ENCODE measurements at regions of chr2 and their contacts with region 1.

Region 1: GRCh38 chr2:88669371-88670214 is 21.9 kb upstream of the RPIA start:
- DNase-seq: no peak
- ATAC-seq: peak in 7 of 8 donors; percentile 42 to 84 (median 75)
- H3K4me3 ChIP-seq: no peak overlapping the region
- H3K27ac ChIP-seq: no peak overlapping the region
- H3K4me1 ChIP-seq: peaks cover 0 to 6% (median 0%) of the 10 kb centered on the region in 9 donors
- H3K27me3 ChIP-seq: no peaks in the 10 kb centered on the region
- CTCF ChIP-seq: peak; percentile 28 to 77 (median 64)

Region 2: DNA sequence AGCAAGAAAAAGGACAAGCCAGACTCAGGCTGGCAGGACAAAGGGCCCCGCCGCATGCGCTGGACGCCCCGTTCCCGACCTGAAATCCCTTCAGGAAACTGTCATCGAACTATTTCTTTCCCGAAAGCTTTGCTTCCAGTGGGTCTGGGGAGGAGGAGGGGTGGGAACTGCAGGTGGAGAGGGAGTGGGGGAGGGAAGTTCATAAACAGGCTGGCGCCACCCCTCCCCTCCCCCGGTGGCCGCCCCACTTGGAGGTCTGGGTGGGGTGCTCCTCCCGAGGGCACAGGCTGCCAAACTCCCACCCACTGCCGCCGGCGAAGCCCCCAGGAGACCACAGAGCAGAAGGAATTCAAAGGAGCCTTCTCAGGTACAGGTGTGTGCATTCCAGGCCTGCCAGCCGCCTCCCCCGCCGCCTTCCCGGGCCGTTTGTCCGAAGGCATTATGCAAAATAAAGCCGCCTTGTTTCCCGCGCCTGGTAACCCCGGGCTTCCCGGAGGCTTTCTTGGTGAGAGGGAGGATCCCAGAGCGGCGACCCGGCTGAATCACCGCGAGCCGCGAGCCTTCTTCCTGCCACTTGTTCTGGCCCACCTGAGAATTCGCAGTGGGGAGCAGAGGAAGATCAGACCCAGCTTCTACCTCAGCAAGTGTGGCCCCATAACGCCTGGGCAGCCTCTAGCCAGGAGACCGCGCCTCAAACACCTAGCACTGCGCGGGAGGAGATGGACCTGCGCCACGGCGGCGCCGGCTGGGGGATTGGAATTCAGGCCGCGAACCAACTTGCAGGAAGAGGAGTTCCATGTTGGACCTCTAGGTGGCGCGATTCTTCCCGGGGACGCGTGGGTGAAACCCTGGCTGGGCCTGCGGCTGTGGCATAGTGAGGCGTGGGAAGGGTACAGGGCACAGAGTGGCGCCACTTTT is 319.0 kb before region 1 on chr2:
- intact Hi-C with region 1: loop called in 1 of 10 experiments (anchors 10 kb)
- DNase-seq: peak; percentile 22 to 32
- ATAC-seq: peak in 3 of 8 donors; percentile 15 to 61 (median 26)
- H3K4me3 ChIP-seq: peak overlapping the region in 7 of 10 donors; percentile 5 to 27 (median 18)
- H3K27ac ChIP-seq: no peak overlapping the region
- H3K4me1 ChIP-seq: peaks cover 0 to 8% (median 7%) of the 10 kb centered on the region in 9 donors
- H3K27me3 ChIP-seq: peaks cover 0 to 62% (median 47%) of the 10 kb centered on the region in 7 donors
- CTCF ChIP-seq: peak in 8 of 9 donors; percentile 26 to 69 (median 57)

Region 3: DNA sequence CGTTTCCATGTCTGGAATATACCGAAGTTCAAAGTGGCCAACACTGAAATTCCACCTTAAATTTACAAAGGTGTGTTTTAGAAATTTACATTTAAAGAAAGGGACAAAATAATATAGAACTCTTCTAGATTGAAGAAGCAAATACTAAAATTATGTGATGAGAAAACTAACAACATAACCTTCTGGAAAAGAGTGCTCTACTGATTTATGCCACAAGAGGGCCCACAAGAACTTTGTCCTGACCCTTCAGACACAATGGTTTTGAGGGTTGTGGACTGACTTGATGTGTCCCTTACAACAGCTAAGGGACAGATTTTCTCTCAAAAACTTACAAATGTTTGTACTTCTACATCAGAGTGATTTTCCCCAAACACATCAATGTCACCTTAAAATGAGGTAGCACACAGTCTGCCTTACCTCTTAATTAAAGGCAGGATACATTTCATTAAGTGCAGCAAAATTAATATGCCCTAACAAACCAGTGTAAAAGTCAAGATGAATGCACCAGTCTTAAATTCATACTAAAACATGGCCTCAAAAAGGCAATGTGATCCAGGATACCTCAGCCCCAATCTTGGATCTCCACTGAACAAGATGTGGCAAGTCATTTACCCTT is 78.5 kb before region 1 on chr2:
- intact Hi-C with region 1: loop called (anchors 1 to 5 kb)
- DNase-seq: peak in 1 of 2 donors; percentile 55
- ATAC-seq: peak in 7 of 8 donors; percentile 70 to 93 (median 87)
- H3K4me3 ChIP-seq: no peak overlapping the region
- H3K27ac ChIP-seq: peak overlapping the region in 1 of 10 donors; percentile 12
- H3K4me1 ChIP-seq: peaks cover 0 to 8% (median 0%) of the 10 kb centered on the region in 9 donors
- H3K27me3 ChIP-seq: no peaks in the 10 kb centered on the region
- CTCF ChIP-seq: peak; percentile 65 to 94 (median 82)

Region 4: GRCh38 chr2:88632569-88632968 is 37.0 kb before region 1 on chr2:
- intact Hi-C with region 1: loop called in 4 of 10 experiments (anchors 5 kb)
- DNase-seq: no peak
- ATAC-seq: no peak
- H3K4me3 ChIP-seq: no peak overlapping the region
- H3K27ac ChIP-seq: no peak overlapping the region
- H3K4me1 ChIP-seq: peaks cover 0 to 12% (median 8%) of the 10 kb centered on the region in 9 donors
- H3K27me3 ChIP-seq: no peaks in the 10 kb centered on the region
- CTCF ChIP-seq: no peak

Region 5: GRCh38 chr2:88770016-88770415 is 100.4 kb after region 1 on chr2:
- intact Hi-C with region 1: no loop called
- DNase-seq: no peak
- ATAC-seq: no peak
- H3K4me3 ChIP-seq: no peak overlapping the region
- H3K27ac ChIP-seq: no peak overlapping the region
- H3K4me1 ChIP-seq: peaks cover 0 to 10% (median 8%) of the 10 kb centered on the region in 9 donors
- H3K27me3 ChIP-seq: peaks cover 2 to 26% (median 20%) of the 10 kb centered on the region in 7 donors
- CTCF ChIP-seq: no peak